ENCODE measurements at regions of chr3 and their contacts with region 1.

Region 1: DNA sequence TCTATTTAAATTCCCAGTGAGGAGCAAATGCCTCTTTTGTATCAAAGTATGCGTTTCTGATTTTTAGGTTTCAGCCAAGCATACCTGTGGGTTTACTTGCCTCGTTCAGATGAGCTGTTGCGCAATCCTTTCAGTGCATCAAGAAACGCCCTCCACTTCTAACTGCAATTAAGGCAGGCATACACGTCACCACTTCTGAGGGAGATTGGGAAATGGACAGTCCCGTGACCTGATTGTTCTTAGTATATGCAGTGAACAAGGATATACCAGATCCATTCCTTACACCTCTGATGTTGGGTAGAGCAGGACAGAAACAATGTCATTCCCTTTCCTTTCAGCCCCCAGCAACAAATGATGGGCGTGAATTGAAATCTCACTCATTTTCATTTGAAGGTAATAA is 219.0 kb downstream of the ITPR1 start:
- DNase-seq: no peak
- ATAC-seq: no peak
- H3K4me3 ChIP-seq: no peak overlapping the region
- H3K27ac ChIP-seq: no peak overlapping the region
- H3K4me1 ChIP-seq: no peaks in the 10 kb centered on the region
- H3K27me3 ChIP-seq: no peaks in the 10 kb centered on the region
- CTCF ChIP-seq: no peak
- EP300 ChIP-seq: no peak
- POLR2A ChIP-seq: no peak
- RAD21 ChIP-seq: no peak

Region 2: GRCh38 chr3:4751502-4752101 is 39.5 kb after region 1 on chr3:
- CTCF ChIA-PET with region 1: interaction called, 24 read pairs
- POLR2A ChIA-PET with region 1: interaction called, 5 read pairs
- RAD21 ChIA-PET with region 1: interaction called, 264 read pairs
- SMC1A ChIA-PET with region 1: interaction called, 36 read pairs
- in situ Hi-C with region 1: no loop called
- intact Hi-C with region 1: no loop called
- DNase-seq: no peak
- ATAC-seq: peak; percentile 3
- H3K4me3 ChIP-seq: peak overlapping the region; percentile 65
- H3K27ac ChIP-seq: peak overlapping the region; percentile 95
- H3K4me1 ChIP-seq: peaks cover 71% of the 10 kb centered on the region
- H3K27me3 ChIP-seq: no peaks in the 10 kb centered on the region
- CTCF ChIP-seq: no peak
- EP300 ChIP-seq: peak in 1 of 2 experiments; percentile 4; a peak in 1 of 4 replicates
- POLR2A ChIP-seq: no peak
- RAD21 ChIP-seq: no peak

Region 3: DNA sequence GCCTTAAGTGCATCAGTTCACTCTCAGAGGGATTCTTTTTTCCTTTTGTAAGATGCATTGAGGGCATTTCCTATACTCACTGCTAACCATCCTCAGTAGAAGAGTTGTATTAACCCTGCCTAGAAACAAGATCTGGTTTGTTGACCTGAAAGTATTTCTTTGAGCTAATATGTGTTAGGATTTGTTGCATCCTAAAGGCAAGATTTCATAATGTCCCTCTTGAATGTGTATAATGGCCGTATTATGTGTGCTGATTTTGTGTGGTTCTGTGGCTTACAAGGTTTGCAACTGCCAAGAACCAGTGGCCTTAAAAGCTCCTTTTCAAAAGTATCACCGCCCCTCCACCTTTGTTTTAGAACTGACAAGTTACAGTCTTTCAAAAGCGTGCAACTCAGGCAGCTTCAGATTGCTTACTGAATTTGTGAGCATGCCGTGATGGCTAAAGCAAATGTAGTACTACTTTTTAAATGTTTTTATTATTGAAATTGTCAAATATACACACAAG is 85.1 kb after region 1 on chr3:
- CTCF ChIA-PET with region 1: interaction called, 19 read pairs
- POLR2A ChIA-PET with region 1: no interaction called
- RAD21 ChIA-PET with region 1: interaction called, 7 read pairs
- SMC1A ChIA-PET with region 1: interaction called, 10 read pairs
- in situ Hi-C with region 1: no loop called
- intact Hi-C with region 1: no loop called
- DNase-seq: no peak
- ATAC-seq: no peak
- H3K4me3 ChIP-seq: no peak overlapping the region
- H3K27ac ChIP-seq: no peak overlapping the region
- H3K4me1 ChIP-seq: no peaks in the 10 kb centered on the region
- H3K27me3 ChIP-seq: no peaks in the 10 kb centered on the region
- CTCF ChIP-seq: no peak
- EP300 ChIP-seq: no peak
- POLR2A ChIP-seq: no peak
- RAD21 ChIP-seq: no peak

Region 4: GRCh38 chr3:4845882-4846281 is 133.7 kb after region 1 on chr3:
- CTCF ChIA-PET with region 1: interaction called, 10 read pairs
- POLR2A ChIA-PET with region 1: no interaction called
- RAD21 ChIA-PET with region 1: interaction called, 8 read pairs
- SMC1A ChIA-PET with region 1: interaction called, 6 read pairs
- in situ Hi-C with region 1: no loop called
- intact Hi-C with region 1: no loop called
- DNase-seq: peak; percentile 89
- ATAC-seq: peak; percentile 75
- H3K4me3 ChIP-seq: no peak overlapping the region
- H3K27ac ChIP-seq: peak overlapping the region; percentile 74
- H3K4me1 ChIP-seq: peaks cover 45% of the 10 kb centered on the region
- H3K27me3 ChIP-seq: no peaks in the 10 kb centered on the region
- CTCF ChIP-seq: no peak
- EP300 ChIP-seq: peak; percentile 98 to 99
- POLR2A ChIP-seq: no peak
- RAD21 ChIP-seq: no peak

Region 5: DNA sequence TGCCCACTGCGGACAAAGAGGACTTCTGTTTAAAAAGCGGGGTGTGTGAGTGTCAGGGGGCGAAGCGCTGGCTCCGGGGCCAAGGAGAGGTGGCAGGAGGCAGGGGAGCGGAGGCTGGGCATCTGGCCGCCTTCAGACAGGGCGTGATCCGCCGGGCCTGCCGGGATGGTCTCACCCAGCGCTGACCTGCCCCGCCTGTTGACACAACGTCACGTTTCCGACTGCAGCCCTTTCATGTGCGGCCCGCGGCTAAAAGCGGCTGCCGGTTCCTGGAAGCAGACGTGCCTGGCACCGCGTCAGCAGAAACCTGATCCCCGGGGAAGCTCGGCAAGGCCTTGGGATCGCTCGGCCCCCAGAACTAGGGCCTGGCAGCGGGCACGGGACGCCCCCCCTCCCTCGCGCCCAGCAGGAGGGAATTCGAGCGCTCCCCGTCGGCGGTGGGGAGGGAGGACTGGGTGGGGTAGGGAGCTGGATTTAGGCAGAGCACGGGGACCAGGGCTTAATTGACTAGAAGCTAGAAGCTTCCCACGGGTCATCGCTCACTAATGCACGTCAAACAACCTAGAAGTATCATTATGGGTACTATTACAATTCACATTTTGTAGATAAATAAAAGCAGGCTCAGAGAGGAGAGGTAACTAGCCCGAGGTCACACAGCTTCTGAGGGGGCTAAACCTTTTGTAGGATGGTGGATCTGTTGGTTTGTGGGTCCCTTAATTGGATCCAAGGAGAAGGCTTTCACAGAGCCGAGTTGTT is 274.8 kb after region 1 on chr3:
- CTCF ChIA-PET with region 1: interaction called, 63 read pairs
- POLR2A ChIA-PET with region 1: no interaction called
- RAD21 ChIA-PET with region 1: interaction called, 51 read pairs
- SMC1A ChIA-PET with region 1: interaction called, 30 read pairs
- in situ Hi-C with region 1: loop called (anchors 5 kb)
- intact Hi-C with region 1: loop called (anchors 1 kb)
- DNase-seq: no peak
- ATAC-seq: peak; percentile 69
- H3K4me3 ChIP-seq: peak overlapping the region; percentile 70
- H3K27ac ChIP-seq: peak overlapping the region; percentile 86
- H3K4me1 ChIP-seq: peaks cover 38% of the 10 kb centered on the region
- H3K27me3 ChIP-seq: no peaks in the 10 kb centered on the region
- CTCF ChIP-seq: no peak
- EP300 ChIP-seq: 0 out of 4 replicates have a peak, but pooled peaks of 1 of the 2 experiments have one; percentile 58
- POLR2A ChIP-seq: peak; percentile 92
- RAD21 ChIP-seq: no peak; the same call in 1 of the 2 replicates

Region 6: DNA sequence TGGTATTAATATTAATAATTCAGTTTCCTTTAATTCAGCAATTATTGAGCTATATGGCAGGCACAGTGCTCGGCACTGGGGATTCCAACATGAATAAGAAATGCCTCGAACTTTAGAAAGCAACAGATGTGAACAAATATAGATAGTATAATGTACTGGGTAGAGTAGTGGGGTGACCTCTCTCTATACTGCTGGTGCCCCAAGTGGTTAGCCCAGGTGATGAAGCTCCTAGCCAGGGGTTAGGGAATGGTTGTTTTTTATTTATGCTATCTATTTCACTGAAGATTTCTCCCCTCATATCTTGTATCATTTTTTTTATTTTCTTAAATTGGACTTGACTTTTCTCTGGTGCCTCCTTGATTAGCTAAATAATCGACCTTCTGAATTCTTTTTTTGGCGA is 329.2 kb after region 1 on chr3:
- CTCF ChIA-PET with region 1: interaction called, 14 read pairs
- POLR2A ChIA-PET with region 1: no interaction called
- RAD21 ChIA-PET with region 1: interaction called, 8 read pairs
- SMC1A ChIA-PET with region 1: interaction called, 9 read pairs
- in situ Hi-C with region 1: no loop called
- intact Hi-C with region 1: no loop called
- DNase-seq: no peak
- ATAC-seq: peak; percentile 49
- H3K4me3 ChIP-seq: no peak overlapping the region
- H3K27ac ChIP-seq: no peak overlapping the region
- H3K4me1 ChIP-seq: peaks cover 9% of the 10 kb centered on the region
- H3K27me3 ChIP-seq: no peaks in the 10 kb centered on the region
- CTCF ChIP-seq: 0 out of 6 replicates have a peak, but pooled peaks of 1 of the 3 experiments have one; percentile 18
- EP300 ChIP-seq: no peak
- POLR2A ChIP-seq: no peak
- RAD21 ChIP-seq: no peak

Region 7: GRCh38 chr3:5194341-5195159 is 482.4 kb after region 1 on chr3:
- CTCF ChIA-PET with region 1: interaction called, 10 read pairs
- POLR2A ChIA-PET with region 1: no interaction called
- RAD21 ChIA-PET with region 1: interaction called, 3 read pairs
- SMC1A ChIA-PET with region 1: no interaction called
- in situ Hi-C with region 1: no loop called
- intact Hi-C with region 1: no loop called
- DNase-seq: no peak
- ATAC-seq: peak; percentile 49
- H3K4me3 ChIP-seq: peak overlapping the region; percentile 39; the same call in 1 of the 2 replicates
- H3K27ac ChIP-seq: peak overlapping the region; percentile 94
- H3K4me1 ChIP-seq: peaks cover 57% of the 10 kb centered on the region
- H3K27me3 ChIP-seq: no peaks in the 10 kb centered on the region
- CTCF ChIP-seq: no peak
- EP300 ChIP-seq: no peak
- POLR2A ChIP-seq: peak; percentile 20; the same call in 1 of the 2 replicates
- RAD21 ChIP-seq: no peak

Measured in GM12878 (cell line).